PC-3 (cell line): ENCODE measurements at regions of chr17 and their contacts with region 1.

Region 1: GRCh38 chr17:16380640-16381495 is at the start of gene UBB:
- DNase-seq: peak; percentile 98
- ATAC-seq: peak; percentile 89
- H3K4me3 ChIP-seq: peak within 1 kb of the TSS; percentile 81
- H3K27ac ChIP-seq: peak within 1 kb of the TSS; percentile 70
- H3K4me1 ChIP-seq: peaks cover 38% of the 10 kb centered on the region
- H3K27me3 ChIP-seq: no peaks in the 10 kb centered on the region
- CTCF ChIP-seq: no peak
- total RNA-seq, gene UBB: 2,112 and 2,970 TPM in 2 replicates

Region 2: GRCh38 chr17:16419074-16419928 is 38.4 kb after region 1 on chr17:
- CTCF ChIA-PET with region 1: no interaction called
- POLR2A ChIA-PET with region 1: no interaction called
- intact Hi-C with region 1: loop called (anchors 1 kb)
- DNase-seq: peak; percentile 94
- ATAC-seq: peak; percentile 83
- H3K4me3 ChIP-seq: peak overlapping the region; percentile 6; the same call in 1 of the 2 replicates
- H3K27ac ChIP-seq: peak overlapping the region; percentile 85
- H3K4me1 ChIP-seq: peaks cover 31% of the 10 kb centered on the region
- H3K27me3 ChIP-seq: no peaks in the 10 kb centered on the region
- CTCF ChIP-seq: no peak

Region 3: DNA sequence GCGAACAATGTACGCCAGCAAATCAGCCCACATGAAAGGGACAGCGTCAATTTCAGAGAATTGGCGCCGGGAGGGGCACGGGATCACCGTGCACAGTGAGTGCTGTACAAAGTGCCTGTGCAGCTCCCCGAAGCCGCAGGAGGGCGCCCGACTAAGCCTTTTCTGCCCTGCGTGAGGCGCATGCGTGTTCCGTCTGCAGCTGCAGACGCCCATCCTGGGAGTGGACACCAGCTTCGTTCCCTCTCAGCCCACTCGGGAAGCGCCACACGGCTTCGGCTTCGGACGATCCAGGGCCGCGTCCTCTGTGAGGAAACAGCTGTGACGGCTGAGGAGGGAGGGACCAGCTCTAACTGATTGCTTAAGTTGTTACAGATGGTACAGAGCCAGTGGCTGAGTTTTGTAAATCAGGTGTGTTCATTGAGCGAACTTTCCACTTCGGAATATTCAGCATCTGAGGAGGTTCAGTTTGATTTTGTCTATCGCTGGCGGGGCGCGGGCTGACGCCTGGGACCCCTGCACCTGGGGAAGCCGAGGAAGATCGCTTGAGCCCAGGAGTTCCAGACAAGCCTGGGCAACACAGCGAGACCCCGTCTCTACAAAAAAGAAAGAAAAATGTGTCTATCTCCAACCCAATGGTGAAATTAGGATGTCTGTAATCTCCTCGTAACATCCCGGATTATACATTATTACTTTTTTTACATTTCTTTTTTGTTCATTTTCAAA is 203.6 kb after region 1 on chr17:
- CTCF ChIA-PET with region 1: no interaction called
- POLR2A ChIA-PET with region 1: interaction called, 14 read pairs
- intact Hi-C with region 1: no loop called
- DNase-seq: peak; percentile 97
- ATAC-seq: peak; percentile 99
- H3K4me3 ChIP-seq: peak overlapping the region; percentile 62
- H3K27ac ChIP-seq: no peak overlapping the region
- H3K4me1 ChIP-seq: peaks cover 7% of the 10 kb centered on the region; the same call in 1 of the 2 replicates
- H3K27me3 ChIP-seq: no peaks in the 10 kb centered on the region
- CTCF ChIP-seq: peak; percentile 96